ENCODE measurements at regions of chr15 and their contacts with region 1.

Region 1: DNA sequence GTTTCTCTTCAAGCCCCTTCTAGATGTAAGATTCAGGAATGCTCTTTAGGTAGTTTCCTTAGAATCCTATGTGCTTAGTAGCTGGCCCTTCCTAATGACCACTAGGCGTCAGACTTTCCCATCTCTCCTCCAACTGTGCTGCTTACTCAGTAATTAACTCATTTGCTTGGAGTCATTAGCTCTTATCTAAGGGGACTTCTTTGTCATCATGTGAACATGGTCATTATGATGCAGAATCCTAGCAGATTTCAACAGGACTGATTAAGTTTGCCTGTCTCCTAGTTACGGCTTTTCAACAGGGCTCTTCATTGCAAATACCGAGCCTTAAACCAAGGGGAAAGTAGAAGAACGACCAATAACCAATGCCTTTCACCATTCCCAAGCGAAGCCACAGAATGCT is 46.4 kb downstream of the GJD2 start:
- DNase-seq: peak in 3 of 7 donors; percentile 12 to 48 (median 26)
- H3K4me3 ChIP-seq: no peak overlapping the region
- H3K27ac ChIP-seq: no peak overlapping the region
- H3K4me1 ChIP-seq: no peaks in the 10 kb centered on the region
- H3K27me3 ChIP-seq: no peaks in the 10 kb centered on the region
- CTCF ChIP-seq: peak; percentile 59 to 82 (median 72)
- POLR2A ChIP-seq: no peak

Region 2: DNA sequence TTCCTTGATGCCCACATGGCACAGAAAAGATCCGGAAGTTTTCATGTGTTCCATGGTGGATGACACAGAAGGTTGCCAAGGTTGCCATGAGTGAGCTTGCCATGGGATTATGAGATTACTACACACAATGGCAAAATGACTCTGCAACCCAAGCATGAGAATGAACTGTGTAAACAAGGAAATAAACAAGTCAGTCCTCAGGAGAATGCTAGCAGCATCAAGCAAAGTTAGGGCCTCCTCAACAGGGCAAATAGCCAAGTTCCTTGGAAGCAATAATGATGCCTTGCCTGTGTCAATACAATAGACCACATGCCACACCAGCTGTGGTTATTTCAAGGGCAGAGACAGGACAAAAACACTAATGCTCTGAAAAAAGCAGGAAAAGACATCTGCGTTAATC is 219.3 kb after region 1 on chr15:
- intact Hi-C with region 1: loop called (anchors 5 to 10 kb)
- DNase-seq: no peak
- H3K4me3 ChIP-seq: no peak overlapping the region
- H3K27ac ChIP-seq: no peak overlapping the region
- H3K4me1 ChIP-seq: no peaks in the 10 kb centered on the region
- H3K27me3 ChIP-seq: no peaks in the 10 kb centered on the region
- CTCF ChIP-seq: no peak
- POLR2A ChIP-seq: no peak

Measured in adrenal gland (tissue), 19 donors.